ENCODE measurements at regions of chr4 and their contacts with region 1.

Region 1: GRCh38 chr4:73258686-73259570 is at the start of gene ANKRD17:
- DNase-seq: peak; percentile 95
- ATAC-seq: peak; percentile 82
- H3K4me3 Mint-ChIP-seq: peak within 1 kb of the TSS; percentile 97
- H3K27ac Mint-ChIP-seq: peak within 1 kb of the TSS; percentile 100
- H3K4me1 Mint-ChIP-seq: peaks cover 53% of the 10 kb centered on the region
- H3K27me3 Mint-ChIP-seq: no peaks in the 10 kb centered on the region
- CTCF ChIP-seq: no peak
- total RNA-seq, gene ANKRD17: 50.8 to 53.1 TPM

Region 2: DNA sequence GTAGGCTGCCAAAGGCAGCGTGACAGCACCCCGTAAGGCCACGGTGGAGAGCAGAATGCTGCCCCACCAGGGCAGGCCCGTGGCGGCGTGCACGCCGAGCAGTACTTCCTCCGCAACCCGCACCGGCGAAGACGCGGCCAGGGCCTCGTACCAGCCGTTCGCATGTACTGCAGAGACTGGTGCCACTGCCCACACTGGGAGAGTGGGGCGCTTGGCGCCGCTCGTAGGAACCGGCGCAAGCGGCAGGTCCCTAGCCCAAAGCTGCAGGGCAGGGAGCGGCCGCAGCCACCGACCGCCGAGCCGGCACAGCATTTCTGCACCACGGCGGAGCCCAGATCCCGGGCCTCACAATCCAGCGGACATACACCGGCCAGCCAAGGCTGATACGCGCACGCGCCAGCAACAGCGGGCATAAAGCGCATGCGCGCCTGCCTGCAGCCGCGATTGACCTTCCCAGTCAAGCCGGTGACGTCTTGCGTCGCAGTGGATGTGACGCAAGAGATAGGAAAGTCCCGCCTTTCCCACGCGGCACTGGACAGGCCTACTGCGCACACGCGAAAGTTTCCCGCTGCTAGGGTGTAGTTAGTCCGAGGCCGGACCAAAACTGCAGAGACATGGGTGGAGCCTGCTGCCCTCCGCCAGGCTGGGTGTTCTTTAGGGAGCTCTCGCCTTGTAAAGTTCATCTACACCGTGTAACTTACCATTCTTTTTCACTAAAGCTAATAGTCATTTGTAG is 189.4 kb before region 1 on chr4 and contains the start of gene COX18:
- CTCF ChIA-PET with region 1: interaction called, 9 read pairs
- POLR2A ChIA-PET with region 1: interaction called, 30 read pairs
- intact Hi-C with region 1: loop called (anchors 1 kb)
- DNase-seq: peak; percentile 97
- ATAC-seq: peak; percentile 78
- H3K4me3 Mint-ChIP-seq: peak within 1 kb of the TSS; percentile 82
- H3K27ac Mint-ChIP-seq: peak within 1 kb of the TSS; percentile 98
- H3K4me1 Mint-ChIP-seq: peaks cover 36% of the 10 kb centered on the region
- H3K27me3 Mint-ChIP-seq: no peaks in the 10 kb centered on the region
- CTCF ChIP-seq: no peak
- total RNA-seq, gene COX18: 25.7 to 26.8 TPM

Region 3: DNA sequence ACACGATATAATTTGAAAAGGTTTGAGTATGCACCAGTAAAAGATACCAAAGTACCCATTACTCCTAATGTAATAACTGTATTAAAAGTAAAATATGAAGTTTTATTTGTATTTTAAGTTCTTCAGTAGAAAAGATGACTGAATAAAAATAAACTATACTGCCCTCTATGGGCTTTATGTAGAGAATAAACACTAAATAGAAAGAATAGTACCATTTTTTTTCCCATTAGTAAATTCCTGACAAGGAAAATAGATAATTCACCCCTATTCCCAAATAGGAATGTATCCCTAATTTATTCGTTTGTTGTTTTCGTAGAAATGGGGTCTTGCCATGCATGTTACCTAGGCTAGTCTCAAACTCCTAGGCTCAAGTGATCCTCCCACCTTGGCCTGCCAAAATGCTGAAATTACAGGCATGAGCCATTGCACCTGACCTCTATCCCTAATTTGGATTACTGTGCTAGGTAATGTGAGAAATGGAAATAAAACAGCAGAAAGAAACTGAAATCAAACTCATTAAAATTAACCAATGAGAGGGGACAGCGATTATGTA is 115.9 kb before region 1 on chr4:
- CTCF ChIA-PET with region 1: no interaction called
- POLR2A ChIA-PET with region 1: no interaction called
- intact Hi-C with region 1: loop called (anchors 10 kb)
- DNase-seq: no peak
- ATAC-seq: no peak
- H3K4me3 Mint-ChIP-seq: no peak overlapping the region
- H3K27ac Mint-ChIP-seq: no peak overlapping the region
- H3K4me1 Mint-ChIP-seq: peaks cover 10% of the 10 kb centered on the region
- H3K27me3 Mint-ChIP-seq: no peaks in the 10 kb centered on the region
- CTCF ChIP-seq: peak; percentile 52

Region 4: DNA sequence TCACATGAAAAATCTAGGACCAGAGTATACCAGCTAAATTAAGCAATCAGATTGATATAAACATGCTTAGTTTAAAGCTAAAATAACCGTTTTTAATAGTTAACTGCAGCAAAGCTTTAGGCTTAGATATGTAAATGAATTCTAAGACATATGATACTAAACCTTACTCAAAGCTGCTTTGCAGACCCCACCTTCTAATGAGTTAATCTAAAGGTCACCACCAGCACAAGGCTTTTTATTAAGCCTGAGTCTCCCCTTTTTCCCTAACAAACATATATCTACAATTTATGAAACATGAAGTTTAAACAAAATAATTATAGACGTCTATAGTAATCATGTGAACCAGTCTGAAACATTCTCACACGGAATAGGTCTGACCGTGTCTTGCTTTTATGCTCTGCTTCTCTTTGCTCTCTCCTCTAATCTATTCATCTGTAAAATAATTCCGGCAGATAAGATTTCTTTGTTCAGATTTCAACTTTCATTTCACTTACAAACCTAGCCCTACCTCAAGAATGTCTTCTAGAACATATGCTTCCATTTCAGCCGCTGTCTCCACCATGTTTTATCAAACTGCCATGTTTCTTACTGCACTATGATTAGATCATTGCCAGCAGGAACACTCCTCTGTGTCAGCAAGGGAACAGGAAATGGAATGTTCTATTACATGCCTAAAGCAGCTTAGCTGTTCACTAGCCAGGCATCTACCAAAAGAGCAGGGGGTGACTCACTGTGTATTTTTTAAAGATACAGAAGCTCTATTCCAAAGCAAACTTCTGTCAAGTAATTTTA is 36.3 kb before region 1 on chr4:
- CTCF ChIA-PET with region 1: interaction called, 4 read pairs
- POLR2A ChIA-PET with region 1: interaction called, 4 read pairs
- intact Hi-C with region 1: loop called (anchors 5 kb)
- DNase-seq: peak; percentile 68
- ATAC-seq: peak; percentile 100
- H3K4me3 Mint-ChIP-seq: no peak overlapping the region
- H3K27ac Mint-ChIP-seq: no peak overlapping the region
- H3K4me1 Mint-ChIP-seq: peaks cover 32% of the 10 kb centered on the region
- H3K27me3 Mint-ChIP-seq: no peaks in the 10 kb centered on the region
- CTCF ChIP-seq: no peak

Region 5: DNA sequence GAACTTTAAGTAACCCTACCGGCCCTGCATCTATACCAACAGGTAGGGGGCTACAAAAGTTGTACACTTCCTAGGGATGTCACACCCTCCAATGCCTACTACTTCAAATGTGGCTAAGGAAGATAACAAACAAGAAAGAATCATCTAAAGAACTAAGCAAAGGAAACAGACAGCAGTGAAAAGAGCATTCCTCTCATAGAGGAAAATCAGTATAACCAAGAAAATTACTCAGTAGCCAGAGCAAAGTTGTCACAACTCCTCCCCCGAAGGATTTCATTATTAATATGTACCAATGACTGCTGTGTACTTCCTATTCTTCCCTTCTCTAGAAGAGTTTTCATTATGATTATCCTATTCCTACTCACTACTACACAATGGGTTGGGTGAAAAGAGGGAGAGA is 13.0 kb before region 1 on chr4:
- CTCF ChIA-PET with region 1: interaction called, 14 read pairs
- POLR2A ChIA-PET with region 1: interaction called, 6 read pairs
- intact Hi-C with region 1: no loop called
- DNase-seq: no peak
- ATAC-seq: peak; percentile 24
- H3K4me3 Mint-ChIP-seq: no peak overlapping the region
- H3K27ac Mint-ChIP-seq: peak overlapping the region; percentile 56
- H3K4me1 Mint-ChIP-seq: peaks cover 60% of the 10 kb centered on the region
- H3K27me3 Mint-ChIP-seq: no peaks in the 10 kb centered on the region
- CTCF ChIP-seq: no peak

Measured in activated CD8-positive, alpha-beta T cell treated with anti-CD3 and anti-CD28 coated beads for 36 hours (primary cell).